Activated naive CD4-positive, alpha-beta T cell treated with anti-CD3 and anti-CD28 coated beads, Interleukin-2, amount 10 ng/mL, durations not matched to agents 7 days and 5 days (primary cell): ENCODE measurements at regions of chr11 and their contacts with region 1.

Region 1: GRCh38 chr11:102614485-102614884 is 10.6 kb downstream of the MMP20 start:
- DNase-seq: no peak
- H3K4me3 Mint-ChIP-seq: no peak overlapping the region
- H3K27ac Mint-ChIP-seq: no peak overlapping the region
- H3K4me1 Mint-ChIP-seq: peaks cover 8% of the 10 kb centered on the region
- H3K27me3 Mint-ChIP-seq: peaks cover 17% of the 10 kb centered on the region

Region 2: DNA sequence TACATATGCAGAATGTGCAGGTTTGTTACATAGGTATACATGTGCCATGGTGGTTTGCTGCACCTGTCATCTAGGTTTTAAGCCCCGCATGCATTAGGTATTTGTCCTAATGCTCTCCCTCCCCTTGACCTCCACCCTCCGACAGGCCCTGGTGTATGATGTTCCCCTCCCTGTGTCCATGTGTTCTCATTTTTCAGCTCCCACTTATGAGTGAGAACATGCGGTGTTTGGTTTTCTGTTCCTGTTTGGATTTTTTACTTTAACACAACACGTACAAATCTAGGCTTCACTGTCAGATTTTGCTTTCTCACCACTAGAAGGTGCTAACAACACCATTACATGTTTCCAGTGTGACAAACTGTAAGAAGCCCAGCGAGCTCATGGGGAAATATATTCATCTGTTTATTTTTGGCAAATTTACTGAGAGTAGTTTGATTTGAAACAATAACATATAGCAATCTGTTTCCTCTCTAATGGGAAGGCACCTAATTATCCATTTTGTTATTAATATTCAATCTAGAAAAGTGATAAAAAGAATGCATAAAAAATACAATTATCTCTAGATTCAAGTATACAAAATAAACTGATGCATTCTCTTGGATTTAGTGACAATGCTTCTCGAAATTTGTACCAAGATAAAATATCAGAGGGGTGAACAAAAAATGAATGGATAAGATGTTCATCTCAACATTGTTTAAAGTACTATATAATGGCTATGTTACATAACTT is 320.4 kb before region 1 on chr11:
- CTCF ChIA-PET with region 1: interaction called, 54 read pairs
- DNase-seq: no peak
- H3K4me3 Mint-ChIP-seq: peak overlapping the region; percentile 58
- H3K27ac Mint-ChIP-seq: peak overlapping the region; percentile 16
- H3K4me1 Mint-ChIP-seq: peaks cover 33% of the 10 kb centered on the region
- H3K27me3 Mint-ChIP-seq: no peaks in the 10 kb centered on the region

Region 3: DNA sequence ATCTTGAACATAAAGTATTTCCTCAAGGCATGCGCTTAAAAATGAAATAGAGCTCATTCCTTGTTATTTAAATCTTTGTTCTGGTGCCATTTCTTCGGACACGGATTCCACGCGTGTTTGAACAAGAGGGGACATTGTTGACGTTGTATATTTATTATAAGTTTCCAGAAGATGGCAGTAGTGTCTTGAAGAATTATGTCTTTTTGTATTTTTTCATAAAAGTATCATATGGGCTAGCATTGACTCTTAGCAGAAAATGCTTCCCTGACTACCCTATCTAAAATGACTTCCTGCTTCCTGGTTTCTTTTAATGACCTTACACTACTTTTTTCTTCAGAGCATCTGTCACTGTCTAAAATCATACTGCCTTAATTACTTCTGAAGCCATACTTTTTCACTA is 247.1 kb before region 1 on chr11:
- CTCF ChIA-PET with region 1: interaction called, 13 read pairs
- DNase-seq: no peak
- H3K4me3 Mint-ChIP-seq: no peak overlapping the region
- H3K27ac Mint-ChIP-seq: peak overlapping the region; percentile 12
- H3K4me1 Mint-ChIP-seq: peaks cover 36% of the 10 kb centered on the region
- H3K27me3 Mint-ChIP-seq: no peaks in the 10 kb centered on the region

Region 4: DNA sequence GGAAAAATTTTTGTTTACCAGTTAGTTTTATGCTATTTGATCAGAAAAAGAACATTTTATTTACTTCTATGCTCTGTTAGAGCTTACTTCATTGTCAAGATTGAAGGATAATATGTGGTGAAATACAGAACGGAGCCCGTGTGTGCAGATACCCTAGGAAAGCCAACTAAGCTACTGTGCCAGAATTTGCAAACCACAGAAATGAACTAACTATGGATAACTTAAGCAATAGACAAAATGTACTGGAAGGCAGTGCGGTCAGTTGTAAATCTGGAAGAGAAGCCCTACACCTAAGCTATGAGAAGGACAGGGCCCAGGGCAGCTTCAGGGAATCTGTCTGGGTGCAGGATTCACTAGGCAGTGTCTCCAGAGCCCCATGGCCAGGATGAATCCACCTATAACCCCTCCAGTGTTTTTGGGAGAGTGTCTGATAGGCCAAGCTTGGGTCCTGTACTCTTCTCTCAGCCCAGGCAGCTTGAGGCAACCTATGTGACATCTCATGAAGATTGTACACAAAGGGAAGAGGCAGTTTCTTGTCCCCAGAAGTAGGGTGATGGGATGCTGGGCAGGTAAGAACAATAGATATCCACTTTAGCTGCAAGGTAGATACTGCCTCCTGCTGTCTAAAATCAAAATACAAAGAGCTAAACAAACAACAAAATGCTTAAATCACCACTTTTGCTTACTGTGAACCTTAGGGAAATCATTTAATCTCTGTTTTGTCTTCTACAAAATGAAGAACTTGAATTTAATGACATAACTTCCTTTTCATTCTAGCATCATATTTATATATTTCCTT is 96.0 kb before region 1 on chr11:
- CTCF ChIA-PET with region 1: interaction called, 22 read pairs
- DNase-seq: no peak
- H3K4me3 Mint-ChIP-seq: no peak overlapping the region
- H3K27ac Mint-ChIP-seq: no peak overlapping the region
- H3K4me1 Mint-ChIP-seq: peaks cover 4% of the 10 kb centered on the region
- H3K27me3 Mint-ChIP-seq: peaks cover 25% of the 10 kb centered on the region

Region 5: DNA sequence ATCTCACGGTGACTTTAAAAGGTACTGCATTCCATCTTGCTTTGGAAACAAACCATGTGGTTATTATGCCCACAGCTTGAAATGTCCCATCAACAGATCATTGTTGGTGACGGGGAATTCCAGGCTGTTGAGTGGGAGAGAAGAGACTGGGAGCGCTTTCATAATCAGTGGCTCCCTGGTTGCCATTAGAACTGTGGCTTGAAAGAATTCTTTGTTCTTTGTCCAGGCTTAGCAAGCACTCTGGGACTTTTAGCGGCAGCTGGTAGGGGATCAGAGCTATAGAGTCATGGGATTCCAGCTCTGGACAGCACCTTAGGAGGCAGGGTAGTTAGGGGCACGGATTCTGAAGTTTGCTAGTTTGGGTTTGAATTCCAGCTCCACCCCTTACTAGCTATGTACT is 11.4 kb before region 1 on chr11:
- CTCF ChIA-PET with region 1: interaction called, 25 read pairs
- DNase-seq: no peak
- H3K4me3 Mint-ChIP-seq: no peak overlapping the region
- H3K27ac Mint-ChIP-seq: no peak overlapping the region
- H3K4me1 Mint-ChIP-seq: peaks cover 2% of the 10 kb centered on the region
- H3K27me3 Mint-ChIP-seq: peaks cover 13% of the 10 kb centered on the region

Region 6: DNA sequence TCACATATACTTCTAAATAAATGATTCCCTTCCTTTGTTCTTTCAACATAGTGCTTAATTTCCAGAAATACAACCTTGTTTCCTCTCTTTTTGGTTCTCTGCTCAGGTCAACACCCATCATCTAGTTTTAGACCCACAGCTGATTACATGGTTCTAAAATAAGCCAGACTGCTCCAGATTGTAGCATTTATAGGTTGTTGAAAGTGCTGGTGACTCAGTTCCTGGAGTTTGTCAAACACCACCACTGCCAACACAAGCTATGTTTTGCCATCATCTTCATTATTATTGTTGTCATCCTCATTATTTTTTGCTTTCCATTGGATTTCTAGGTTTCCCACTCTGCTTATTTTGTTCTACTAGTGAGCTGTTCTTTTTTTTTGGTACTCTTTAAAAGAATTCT is 32.9 kb after region 1 on chr11:
- CTCF ChIA-PET with region 1: no interaction called
- DNase-seq: no peak
- H3K4me3 Mint-ChIP-seq: no peak overlapping the region
- H3K27ac Mint-ChIP-seq: no peak overlapping the region
- H3K4me1 Mint-ChIP-seq: no peaks in the 10 kb centered on the region
- H3K27me3 Mint-ChIP-seq: peaks cover 3% of the 10 kb centered on the region